ENCODE measurements at regions of chr7 and their contacts with region 1.

Region 1: DNA sequence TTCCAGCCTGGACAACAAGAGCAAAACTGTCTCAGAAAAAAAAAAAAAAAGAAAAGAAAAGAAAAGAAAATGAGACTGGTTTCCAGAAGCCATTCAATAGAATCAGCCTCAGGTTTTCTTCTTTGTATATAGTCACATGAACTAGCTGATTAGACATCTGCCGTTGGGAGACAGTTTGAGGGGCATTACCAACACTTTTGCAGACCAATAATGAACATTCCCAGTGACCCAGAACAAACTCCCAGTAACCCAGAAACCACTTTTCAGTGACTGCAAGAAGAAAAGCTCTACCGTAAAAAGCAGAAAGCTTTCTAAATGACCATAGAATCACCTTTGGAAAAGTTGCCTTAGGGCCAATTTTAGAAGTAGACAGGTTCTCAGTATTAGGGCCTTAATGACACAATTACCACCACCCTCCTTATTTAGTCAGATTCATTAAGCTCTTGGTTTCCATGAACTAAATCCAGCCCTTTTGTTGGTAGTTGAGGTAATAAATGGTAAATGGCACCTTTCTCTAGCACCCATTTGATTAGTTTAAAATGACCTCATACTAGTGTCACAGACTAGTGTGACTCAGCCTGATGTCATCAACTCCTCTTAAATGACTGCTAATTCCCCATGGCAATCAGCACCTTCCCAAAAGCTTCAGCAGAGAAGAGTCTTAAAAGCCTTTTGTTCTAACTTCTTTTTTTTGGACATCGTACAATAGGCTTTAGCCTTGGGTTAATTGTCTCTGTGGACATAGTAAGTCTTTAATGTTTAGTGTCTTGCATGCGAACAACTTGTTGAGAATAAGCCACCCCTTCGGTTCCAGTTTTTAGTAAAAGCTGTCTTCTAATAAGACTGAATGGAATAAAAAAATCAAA is 33.6 kb upstream of the XRCC2 start:
- DNase-seq: peak; percentile 33
- H3K4me3 ChIP-seq: no peak overlapping the region
- H3K27ac ChIP-seq: no peak overlapping the region
- H3K4me1 ChIP-seq: no peaks in the 10 kb centered on the region
- H3K27me3 ChIP-seq: no peaks in the 10 kb centered on the region
- CTCF ChIP-seq: no peak

Region 2: GRCh38 chr7:152145853-152146466 is 563.6 kb before region 1 on chr7:
- CTCF ChIA-PET with region 1: no interaction called
- POLR2A ChIA-PET with region 1: no interaction called
- intact Hi-C with region 1: loop called (anchors 10 kb)
- DNase-seq: peak; percentile 60
- H3K4me3 ChIP-seq: no peak overlapping the region
- H3K27ac ChIP-seq: no peak overlapping the region
- H3K4me1 ChIP-seq: peaks cover 3% of the 10 kb centered on the region
- H3K27me3 ChIP-seq: no peaks in the 10 kb centered on the region
- CTCF ChIP-seq: peak; percentile 79

Region 3: DNA sequence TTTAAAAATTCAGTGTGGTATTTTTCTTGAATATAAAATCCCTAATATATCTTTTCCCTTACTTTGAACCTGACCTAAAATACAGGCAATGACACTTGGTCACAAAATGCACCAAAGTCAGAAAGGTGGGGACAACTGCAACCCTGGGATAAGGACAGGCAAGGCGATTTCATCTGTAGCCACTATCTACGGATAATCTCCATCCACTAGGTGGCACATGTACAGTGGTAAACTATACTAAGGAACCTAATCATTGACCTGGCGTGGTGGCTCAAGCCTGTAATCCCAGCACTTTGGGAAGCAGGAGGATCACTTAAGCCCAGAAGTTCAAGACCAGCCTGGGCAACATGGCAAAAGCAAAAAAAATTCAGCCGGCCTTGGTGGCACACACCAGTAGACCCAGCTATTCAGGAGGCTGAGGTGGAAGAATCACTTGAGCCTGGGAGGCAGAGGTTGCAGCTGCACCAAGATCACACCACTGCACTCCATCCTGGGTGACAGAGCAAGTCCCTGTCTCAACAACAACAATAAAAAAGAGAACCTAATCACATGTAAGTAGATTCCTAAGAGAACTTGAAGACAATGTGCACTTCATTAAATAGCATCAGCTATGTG is 372.7 kb before region 1 on chr7:
- CTCF ChIA-PET with region 1: interaction called, 5 read pairs
- POLR2A ChIA-PET with region 1: no interaction called
- intact Hi-C with region 1: loop called (anchors 2 kb)
- DNase-seq: peak; percentile 51
- H3K4me3 ChIP-seq: no peak overlapping the region
- H3K27ac ChIP-seq: no peak overlapping the region
- H3K4me1 ChIP-seq: peaks cover 19% of the 10 kb centered on the region
- H3K27me3 ChIP-seq: no peaks in the 10 kb centered on the region
- CTCF ChIP-seq: peak; percentile 69

Region 4: DNA sequence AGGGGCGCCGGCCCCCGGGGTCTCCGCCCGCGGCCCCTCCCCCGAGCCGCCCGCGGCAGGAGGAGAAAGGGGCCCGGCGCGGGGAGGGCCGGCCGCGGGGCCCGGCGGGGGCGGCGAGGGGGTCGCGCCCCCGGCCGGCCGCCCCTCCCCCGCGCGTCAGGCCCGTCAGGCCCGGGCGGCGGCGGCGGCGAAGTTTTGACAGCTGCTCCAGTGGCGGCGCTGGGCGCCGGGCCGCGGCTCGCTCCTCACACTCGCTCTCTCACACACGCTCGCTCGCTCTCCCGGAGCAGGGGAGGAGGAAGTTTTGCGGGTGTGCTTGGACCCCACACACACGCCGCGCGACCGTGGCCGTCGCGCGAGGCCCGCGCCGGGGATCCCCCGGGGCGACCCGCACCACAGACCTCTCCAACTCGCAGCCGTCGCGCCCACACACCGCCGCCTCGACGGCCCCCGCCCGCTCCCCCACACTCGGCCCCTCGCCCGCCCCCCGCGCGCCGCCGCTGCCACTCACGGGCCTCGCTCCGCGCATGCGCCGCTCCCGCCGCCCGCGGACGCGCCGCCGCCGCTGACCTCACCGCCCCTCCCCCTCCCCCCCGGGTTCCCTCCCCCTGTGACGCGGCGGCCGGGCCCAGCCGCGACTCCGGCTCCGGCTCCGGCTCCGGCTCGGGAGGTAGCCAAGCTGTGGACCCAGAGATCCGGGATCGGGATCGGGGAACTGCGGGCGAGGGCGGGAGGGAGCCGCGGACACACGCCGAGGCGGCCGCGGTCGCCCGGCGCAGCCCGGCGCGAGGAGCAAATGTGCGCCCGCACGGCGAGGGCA is 273.2 kb before region 1 on chr7:
- CTCF ChIA-PET with region 1: no interaction called
- POLR2A ChIA-PET with region 1: no interaction called
- intact Hi-C with region 1: loop called (anchors 10 kb)
- DNase-seq: peak; percentile 95
- H3K4me3 ChIP-seq: peak overlapping the region; percentile 62
- H3K27ac ChIP-seq: peak overlapping the region; percentile 92
- H3K4me1 ChIP-seq: peaks cover 5% of the 10 kb centered on the region
- H3K27me3 ChIP-seq: no peaks in the 10 kb centered on the region
- CTCF ChIP-seq: no peak

Region 5: DNA sequence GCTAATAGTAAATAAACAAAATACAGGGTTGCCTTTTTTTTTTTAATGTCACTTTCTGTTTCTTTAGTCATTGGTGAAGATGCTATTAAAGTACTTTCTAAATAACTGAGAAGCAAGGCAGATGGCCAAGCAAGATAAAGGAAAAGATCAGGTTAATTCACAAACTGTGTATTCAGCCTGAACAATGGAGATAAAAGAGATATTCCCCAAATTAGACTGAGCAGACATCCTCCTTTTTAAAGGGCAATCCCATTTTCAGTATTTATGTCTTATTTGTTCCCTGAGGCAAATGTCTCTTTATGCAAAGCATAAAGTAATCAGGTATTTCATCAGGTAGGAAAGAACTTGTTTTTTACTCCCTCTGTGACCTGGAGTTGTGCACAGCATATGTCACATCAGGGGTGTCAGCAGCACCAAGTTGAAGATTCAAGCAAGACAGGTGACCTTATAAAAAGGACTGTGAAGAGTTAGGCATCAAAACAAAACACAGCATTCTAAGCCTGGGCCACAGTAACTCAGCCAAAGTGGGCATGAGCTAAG is 10.3 kb before region 1 on chr7:
- CTCF ChIA-PET with region 1: interaction called, 14 read pairs
- POLR2A ChIA-PET with region 1: no interaction called
- intact Hi-C with region 1: no loop called
- DNase-seq: no peak
- H3K4me3 ChIP-seq: no peak overlapping the region
- H3K27ac ChIP-seq: no peak overlapping the region
- H3K4me1 ChIP-seq: no peaks in the 10 kb centered on the region
- H3K27me3 ChIP-seq: no peaks in the 10 kb centered on the region
- CTCF ChIP-seq: no peak